PC-3 (cell line): ENCODE measurements at regions of chr5 and their contacts with region 1.

Region 1: DNA sequence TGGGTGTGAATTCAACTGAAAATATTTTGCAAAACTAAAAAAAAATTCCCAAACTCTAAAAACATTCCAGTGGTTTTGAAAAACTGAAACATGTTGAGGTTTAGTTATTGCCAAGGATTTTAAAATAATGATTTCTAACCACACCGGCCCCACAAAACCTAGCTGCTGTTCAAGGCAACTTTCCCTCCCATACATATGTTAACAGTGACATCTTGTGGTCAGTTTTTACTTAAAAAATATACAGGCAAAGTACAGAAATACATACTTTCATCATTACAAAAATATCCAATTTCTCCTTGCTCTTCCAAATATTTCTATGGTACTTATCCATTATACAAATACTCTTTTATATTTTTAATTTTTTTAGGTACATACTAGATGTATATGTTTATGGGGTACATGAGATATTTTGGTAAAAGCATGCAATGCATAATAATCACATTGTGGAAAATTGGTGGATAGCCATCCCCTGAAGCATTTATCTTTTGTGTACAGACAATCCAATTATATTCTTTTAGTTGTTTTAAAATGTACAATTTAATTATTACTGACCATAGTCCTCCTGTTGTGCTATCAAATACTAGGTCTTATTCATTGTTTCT is 34.4 kb upstream of the MRPS30 start:
- DNase-seq: peak; percentile 81
- ATAC-seq: peak; percentile 64
- H3K4me3 ChIP-seq: no peak overlapping the region
- H3K27ac ChIP-seq: no peak overlapping the region
- H3K4me1 ChIP-seq: no peaks in the 10 kb centered on the region
- H3K27me3 ChIP-seq: peaks cover 31% of the 10 kb centered on the region
- CTCF ChIP-seq: peak; percentile 76

Region 2: DNA sequence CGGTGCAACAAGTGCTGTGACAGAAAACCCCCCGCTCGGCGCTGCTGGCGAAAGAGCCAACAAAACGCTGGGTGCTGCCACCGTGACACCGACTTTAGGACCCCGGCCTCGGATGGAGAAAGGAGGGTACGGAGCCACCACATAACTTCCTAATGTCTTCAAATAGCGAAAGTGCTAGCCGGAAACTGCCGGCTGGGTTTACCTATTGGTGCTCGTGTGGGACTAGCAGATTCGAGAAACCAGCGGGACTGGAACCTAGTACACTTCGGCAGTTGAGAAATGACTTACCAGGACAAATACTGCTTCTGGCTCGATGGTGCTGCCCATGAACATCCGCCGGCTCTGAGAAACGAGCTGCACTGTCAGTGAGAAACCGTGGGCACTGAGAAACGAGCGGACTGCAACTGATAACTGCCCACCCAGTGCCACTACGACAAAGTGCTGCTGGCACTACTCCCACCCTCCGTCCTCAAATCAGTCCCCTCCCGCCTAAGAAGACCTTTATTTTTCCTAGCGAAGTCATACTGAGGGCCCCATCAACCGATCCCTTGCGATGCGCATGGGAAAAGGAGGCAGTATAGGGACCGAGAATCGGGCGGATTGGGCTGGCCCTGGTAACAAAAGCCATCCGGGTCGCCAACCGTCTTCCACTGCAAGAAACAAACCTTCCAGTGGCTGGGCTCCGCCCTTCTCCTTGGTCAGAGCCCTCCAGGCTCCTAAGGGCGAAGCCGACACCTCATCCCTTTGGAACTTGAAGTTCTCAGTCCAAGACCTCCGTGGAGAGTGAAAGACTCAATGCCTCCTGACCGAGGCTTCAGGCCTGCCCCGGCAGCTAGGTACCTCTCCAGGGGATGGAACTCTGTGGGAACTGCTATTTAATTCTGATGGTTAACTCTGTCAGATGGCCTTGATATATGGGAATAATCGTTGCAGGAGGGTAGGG is 1707.3 kb before region 1 on chr5:
- CTCF ChIA-PET with region 1: no interaction called
- POLR2A ChIA-PET with region 1: no interaction called
- intact Hi-C with region 1: no loop called
- DNase-seq: peak; percentile 98
- ATAC-seq: peak; percentile 42
- H3K4me3 ChIP-seq: peak overlapping the region; percentile 87
- H3K27ac ChIP-seq: peak overlapping the region; percentile 93
- H3K4me1 ChIP-seq: peaks cover 43% of the 10 kb centered on the region
- H3K27me3 ChIP-seq: no peaks in the 10 kb centered on the region
- CTCF ChIP-seq: no peak

Region 3: GRCh38 chr5:43729846-43730478 is 1044.4 kb before region 1 on chr5:
- CTCF ChIA-PET with region 1: no interaction called
- POLR2A ChIA-PET with region 1: no interaction called
- intact Hi-C with region 1: loop called (anchors 1 kb)
- DNase-seq: peak; percentile 55
- ATAC-seq: no peak
- H3K4me3 ChIP-seq: no peak overlapping the region
- H3K27ac ChIP-seq: no peak overlapping the region
- H3K4me1 ChIP-seq: no peaks in the 10 kb centered on the region
- H3K27me3 ChIP-seq: peaks cover 24% of the 10 kb centered on the region
- CTCF ChIP-seq: peak; percentile 85